ENCODE measurements at regions of chr12 and their contacts with region 1.

Region 1: DNA sequence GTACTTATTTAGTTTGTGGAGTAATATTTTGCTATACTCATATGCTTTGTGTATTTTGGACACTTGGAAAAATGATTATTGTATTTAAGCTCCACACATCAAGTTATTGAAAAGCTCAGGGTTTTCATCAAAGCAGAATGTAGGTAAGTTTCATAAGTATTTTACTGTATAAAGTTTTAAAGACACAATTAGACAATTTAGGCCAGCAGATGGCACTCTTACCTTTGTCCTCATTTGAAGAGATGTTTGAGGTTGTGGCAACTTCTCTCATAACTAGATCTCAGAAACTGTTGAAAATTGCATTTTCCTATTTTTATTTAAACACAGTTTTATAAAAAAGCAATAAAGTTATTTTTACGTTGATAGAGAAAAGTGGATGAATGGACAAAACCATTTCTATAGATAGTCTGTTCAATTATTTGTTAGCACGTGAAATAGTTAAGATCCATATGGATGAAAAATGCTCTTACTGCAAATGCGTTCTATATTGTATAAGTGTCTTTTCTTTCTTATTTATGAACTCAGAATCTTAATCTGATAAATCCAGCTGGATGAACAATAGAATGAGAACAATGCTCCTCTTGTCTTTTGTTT is 300.0 kb downstream of the AEBP2 start:
- DNase-seq: peak; percentile 44
- H3K4me3 ChIP-seq: peak overlapping the region in 1 of 2 experiments; percentile 22; a peak in 1 of 4 replicates
- H3K27ac ChIP-seq: no peak overlapping the region
- H3K4me1 ChIP-seq: no peaks in the 10 kb centered on the region
- H3K27me3 ChIP-seq: no peaks in the 10 kb centered on the region
- CTCF ChIP-seq: peak; percentile 81
- EP300 ChIP-seq: no peak
- RAD21 ChIP-seq: peak; percentile 82

Region 2: DNA sequence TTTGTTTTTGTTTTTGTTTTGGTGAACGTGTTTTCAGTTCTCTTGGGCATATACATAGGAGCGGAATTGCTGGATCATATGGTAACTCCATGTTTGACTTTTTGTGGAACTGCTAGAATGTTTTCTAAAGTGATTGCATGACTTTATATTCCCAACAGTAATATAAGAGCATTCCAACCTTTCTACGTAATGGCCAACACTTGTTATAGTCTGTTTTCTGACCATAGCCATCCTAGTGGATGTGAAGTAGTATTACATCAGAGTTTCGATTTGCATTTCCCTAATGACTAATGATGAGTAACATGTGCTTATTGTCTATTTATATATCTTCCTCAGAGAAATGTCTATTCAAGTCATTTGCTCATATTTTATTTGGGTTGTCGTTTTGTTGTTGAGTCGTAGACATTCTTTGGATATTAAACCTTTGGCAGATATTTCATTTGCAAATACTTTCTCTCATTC is 31.3 kb before region 1 on chr12:
- CTCF ChIA-PET with region 1: no interaction called
- POLR2A ChIA-PET with region 1: no interaction called
- DNase-seq: no peak
- H3K4me3 ChIP-seq: no peak overlapping the region
- H3K27ac ChIP-seq: peak overlapping the region in 1 of 2 experiments; percentile 29; a peak in 2 of 4 replicates
- H3K4me1 ChIP-seq: peaks cover 0 to 11% of the 10 kb centered on the region in 2 experiments; a peak in 1 of 4 replicates
- H3K27me3 ChIP-seq: no peaks in the 10 kb centered on the region
- CTCF ChIP-seq: peak; percentile 44
- EP300 ChIP-seq: peak in 1 of 2 experiments; percentile 55; a peak in 1 of 4 replicates
- RAD21 ChIP-seq: no peak

Region 3: DNA sequence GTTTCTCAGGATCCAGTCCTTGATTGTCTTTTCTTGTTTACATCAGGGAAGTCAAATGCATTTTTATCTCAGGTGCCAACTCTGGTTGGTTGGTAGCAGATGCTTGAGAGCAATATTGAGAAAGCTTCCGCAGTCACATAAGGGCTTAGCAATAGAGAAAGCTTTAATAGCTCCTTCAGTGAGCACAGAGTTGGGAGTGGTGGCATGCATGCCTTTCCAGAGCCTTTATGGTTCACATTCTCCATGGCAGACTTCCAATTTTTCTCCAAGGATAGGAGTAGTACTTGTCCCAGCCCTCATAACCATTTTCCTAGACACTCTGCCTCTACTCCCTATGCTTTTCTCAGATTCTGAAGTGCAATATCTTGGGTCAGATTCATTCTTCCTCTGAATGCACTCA is 19.6 kb before region 1 on chr12:
- CTCF ChIA-PET with region 1: interaction called, 19 read pairs
- POLR2A ChIA-PET with region 1: no interaction called
- DNase-seq: no peak
- H3K4me3 ChIP-seq: no peak overlapping the region
- H3K27ac ChIP-seq: no peak overlapping the region
- H3K4me1 ChIP-seq: no peaks in the 10 kb centered on the region
- H3K27me3 ChIP-seq: no peaks in the 10 kb centered on the region
- CTCF ChIP-seq: no peak
- EP300 ChIP-seq: no peak
- RAD21 ChIP-seq: no peak

Region 4: DNA sequence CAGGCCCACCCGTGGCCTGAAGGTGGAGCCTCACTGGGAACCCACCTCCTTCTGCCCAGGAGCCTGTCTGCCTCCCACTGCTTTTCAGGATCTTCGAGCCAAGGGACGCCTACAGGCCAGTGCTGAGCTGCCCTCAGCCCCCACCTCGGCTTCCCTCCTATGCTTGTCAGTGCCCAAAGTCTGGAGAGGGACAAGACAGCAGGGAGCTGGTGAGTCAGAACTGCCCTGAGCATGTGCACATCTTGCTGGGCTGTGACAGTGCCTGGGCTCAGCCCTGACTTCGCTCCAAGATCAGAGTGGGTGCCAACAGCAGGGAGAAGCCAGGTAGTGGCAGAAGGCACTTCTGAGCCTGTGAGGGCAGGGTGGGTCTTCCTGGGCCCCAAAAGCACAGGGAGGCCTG is 13.2 kb before region 1 on chr12:
- CTCF ChIA-PET with region 1: interaction called, 19 read pairs
- POLR2A ChIA-PET with region 1: no interaction called
- DNase-seq: no peak
- H3K4me3 ChIP-seq: no peak overlapping the region
- H3K27ac ChIP-seq: no peak overlapping the region
- H3K4me1 ChIP-seq: no peaks in the 10 kb centered on the region
- H3K27me3 ChIP-seq: no peaks in the 10 kb centered on the region
- CTCF ChIP-seq: no peak
- EP300 ChIP-seq: no peak
- RAD21 ChIP-seq: no peak

Region 5: GRCh38 chr12:19757317-19757877 is 18.1 kb after region 1 on chr12:
- CTCF ChIA-PET with region 1: interaction called, 23 read pairs
- POLR2A ChIA-PET with region 1: no interaction called
- DNase-seq: peak; percentile 31
- H3K4me3 ChIP-seq: no peak overlapping the region
- H3K27ac ChIP-seq: peak overlapping the region in 1 of 2 experiments; percentile 55; a peak in 1 of 4 replicates
- H3K4me1 ChIP-seq: no peaks in the 10 kb centered on the region; a peak in 2 of 4 replicates
- H3K27me3 ChIP-seq: no peaks in the 10 kb centered on the region
- CTCF ChIP-seq: peak; percentile 79
- EP300 ChIP-seq: no peak
- RAD21 ChIP-seq: peak; percentile 87

Region 6: DNA sequence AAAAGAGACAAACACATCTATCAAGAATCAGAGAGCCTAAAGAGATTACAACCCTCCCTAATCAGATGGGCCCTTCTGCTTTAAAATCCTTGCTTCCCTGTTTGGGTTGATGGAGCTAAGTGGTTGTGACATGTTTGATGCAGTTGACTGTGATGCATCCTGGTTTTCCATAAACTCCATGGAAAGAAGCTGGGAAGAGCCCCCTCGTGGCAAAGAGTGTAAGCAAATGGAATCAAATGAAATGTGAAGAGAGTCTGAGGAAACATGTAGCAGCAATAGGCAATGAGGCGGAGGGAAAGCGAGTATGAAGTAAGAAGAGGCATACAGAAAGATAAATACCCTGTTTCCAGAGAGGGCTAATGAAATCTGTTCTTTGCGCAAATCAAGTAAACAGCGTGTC is 885.4 kb after region 1 on chr12:
- CTCF ChIA-PET with region 1: interaction called, 11 read pairs
- POLR2A ChIA-PET with region 1: no interaction called
- DNase-seq: peak; percentile 19
- H3K4me3 ChIP-seq: no peak overlapping the region
- H3K27ac ChIP-seq: no peak overlapping the region
- H3K4me1 ChIP-seq: peaks cover 4 to 5% of the 10 kb centered on the region in 2 experiments; a peak in 3 of 4 replicates
- H3K27me3 ChIP-seq: no peaks in the 10 kb centered on the region
- CTCF ChIP-seq: peak; percentile 60
- EP300 ChIP-seq: no peak
- RAD21 ChIP-seq: peak; percentile 64

Region 7: DNA sequence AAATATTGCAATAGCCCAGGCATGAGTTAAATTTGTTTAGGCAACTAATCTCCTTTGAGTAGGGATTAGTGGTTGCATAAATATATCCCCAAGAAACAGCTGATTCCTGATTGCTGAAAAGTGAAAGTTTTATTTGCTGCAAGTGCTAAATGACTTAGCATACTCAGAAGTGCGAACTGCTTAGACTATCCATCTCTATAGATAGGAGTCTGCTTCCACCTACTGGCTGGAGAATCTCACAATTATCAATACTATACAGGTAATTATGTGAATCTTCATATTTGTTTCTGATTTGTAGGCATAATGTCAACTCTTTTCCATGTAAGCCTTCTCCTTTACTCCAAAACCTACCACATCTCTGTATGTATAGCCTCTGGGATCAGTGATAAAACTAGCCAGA is 1059.3 kb after region 1 on chr12:
- CTCF ChIA-PET with region 1: interaction called, 16 read pairs
- POLR2A ChIA-PET with region 1: no interaction called
- DNase-seq: peak; percentile 14
- H3K4me3 ChIP-seq: no peak overlapping the region
- H3K27ac ChIP-seq: no peak overlapping the region
- H3K4me1 ChIP-seq: no peaks in the 10 kb centered on the region
- H3K27me3 ChIP-seq: no peaks in the 10 kb centered on the region
- CTCF ChIP-seq: peak; percentile 54
- EP300 ChIP-seq: no peak
- RAD21 ChIP-seq: peak; percentile 68

Measured in SK-N-SH (cell line).